CD4-positive, alpha-beta memory T cell (primary cell): ENCODE measurements at regions of chr9 and their contacts with region 1.

Region 1: DNA sequence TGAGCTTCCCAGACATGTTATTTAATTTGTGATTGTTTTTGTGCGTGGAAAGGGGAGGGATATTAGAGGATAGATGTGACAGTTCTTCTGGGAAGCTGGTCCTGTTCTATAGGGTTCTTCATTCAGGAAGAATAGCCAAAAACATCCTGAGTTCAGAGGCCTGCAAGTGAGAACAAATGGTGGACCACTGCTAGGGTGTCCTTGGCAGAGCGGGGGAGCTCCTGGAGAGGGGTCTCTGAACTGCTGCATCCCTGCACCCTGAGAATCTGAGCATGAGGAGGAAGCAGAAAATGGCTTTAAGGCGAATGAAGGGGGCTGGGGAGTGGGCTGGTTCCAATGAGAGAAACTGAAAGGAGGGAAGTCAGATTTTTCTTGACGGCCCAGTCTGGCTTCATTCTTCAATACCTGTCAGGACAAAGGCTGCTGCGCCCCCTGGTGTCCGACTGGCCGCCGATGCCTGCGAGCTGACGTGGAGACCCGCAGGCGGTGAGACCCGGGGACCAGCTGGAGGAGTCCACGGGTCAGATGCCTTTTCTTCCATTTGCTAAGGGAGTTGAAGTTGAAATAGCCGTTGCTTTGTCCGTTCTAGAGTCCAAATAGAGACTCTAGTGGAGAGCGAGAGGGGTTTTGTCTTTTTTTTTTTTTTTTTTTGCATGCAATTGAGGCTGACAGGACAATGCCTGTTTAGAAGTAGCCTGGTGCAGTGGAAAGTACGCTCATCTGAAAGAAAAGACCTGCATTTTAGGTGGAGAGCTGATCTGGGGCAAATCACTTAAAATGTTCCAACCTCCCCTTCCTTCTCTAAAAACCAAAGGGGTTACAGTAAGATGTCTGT is 39.5 kb upstream of the NFIB start:
- DNase-seq: peak; percentile 48 to 62 (median 53)
- H3K4me3 ChIP-seq: no peak overlapping the region
- H3K4me3 Mint-ChIP-seq: peak overlapping the region in 1 of 8 donors; percentile 21
- H3K27ac ChIP-seq: no peak overlapping the region
- H3K27ac Mint-ChIP-seq: no peak overlapping the region
- H3K4me1 ChIP-seq: peaks cover 3% of the 10 kb centered on the region
- H3K4me1 Mint-ChIP-seq: peaks cover 4 to 22% (median 13%) of the 10 kb centered on the region in 4 donors
- H3K27me3 ChIP-seq: peaks cover 9% of the 10 kb centered on the region
- H3K27me3 Mint-ChIP-seq: peaks cover 33 to 43% of the 10 kb centered on the region in 2 donors

Region 2: DNA sequence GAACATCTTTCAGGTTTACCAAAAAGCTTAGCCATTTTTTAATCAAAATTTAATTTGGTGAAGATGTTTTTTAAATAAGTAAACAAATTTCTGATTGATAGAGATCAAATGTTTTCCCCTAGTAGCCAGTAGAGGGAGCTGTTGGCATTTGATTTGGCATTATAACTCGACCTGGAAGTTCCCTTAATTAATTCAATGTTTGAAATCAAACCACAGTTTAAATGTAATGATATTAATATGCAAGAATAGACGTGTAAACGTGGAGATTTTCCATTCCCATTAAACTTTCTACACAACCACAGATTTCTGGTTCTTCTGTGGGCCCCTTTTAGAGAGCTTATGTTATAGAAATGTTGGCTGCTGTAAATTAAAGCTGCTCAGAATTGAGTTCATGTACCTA is 925.9 kb before region 1 on chr9:
- CTCF ChIA-PET with region 1: interaction called, 61 read pairs
- POLR2A ChIA-PET with region 1: no interaction called
- intact Hi-C with region 1: no loop called
- DNase-seq: peak in 3 of 5 donors; percentile 8 to 23 (median 21)
- H3K4me3 ChIP-seq: no peak overlapping the region
- H3K4me3 Mint-ChIP-seq: no peak overlapping the region
- H3K27ac ChIP-seq: no peak overlapping the region
- H3K27ac Mint-ChIP-seq: no peak overlapping the region
- H3K4me1 ChIP-seq: no peaks in the 10 kb centered on the region
- H3K4me1 Mint-ChIP-seq: no peaks in the 10 kb centered on the region
- H3K27me3 ChIP-seq: no peaks in the 10 kb centered on the region
- H3K27me3 Mint-ChIP-seq: no peaks in the 10 kb centered on the region

Region 3: GRCh38 chr9:13443346-13444244 is 909.8 kb before region 1 on chr9:
- CTCF ChIA-PET with region 1: no interaction called
- POLR2A ChIA-PET with region 1: no interaction called
- intact Hi-C with region 1: loop called (anchors 5 kb)
- DNase-seq: no peak
- H3K4me3 ChIP-seq: no peak overlapping the region
- H3K4me3 Mint-ChIP-seq: no peak overlapping the region
- H3K27ac ChIP-seq: no peak overlapping the region
- H3K27ac Mint-ChIP-seq: no peak overlapping the region
- H3K4me1 ChIP-seq: no peaks in the 10 kb centered on the region
- H3K4me1 Mint-ChIP-seq: no peaks in the 10 kb centered on the region
- H3K27me3 ChIP-seq: no peaks in the 10 kb centered on the region
- H3K27me3 Mint-ChIP-seq: no peaks in the 10 kb centered on the region

Region 4: GRCh38 chr9:14478175-14479162 is 125.0 kb after region 1 on chr9:
- CTCF ChIA-PET with region 1: no interaction called
- POLR2A ChIA-PET with region 1: no interaction called
- intact Hi-C with region 1: no loop called
- DNase-seq: no peak
- H3K4me3 ChIP-seq: no peak overlapping the region
- H3K4me3 Mint-ChIP-seq: no peak overlapping the region
- H3K27ac ChIP-seq: no peak overlapping the region
- H3K27ac Mint-ChIP-seq: no peak overlapping the region
- H3K4me1 ChIP-seq: no peaks in the 10 kb centered on the region
- H3K4me1 Mint-ChIP-seq: no peaks in the 10 kb centered on the region
- H3K27me3 ChIP-seq: no peaks in the 10 kb centered on the region
- H3K27me3 Mint-ChIP-seq: peaks cover 5 to 7% of the 10 kb centered on the region in 2 donors